ENCODE measurements at regions of chr10 and their contacts with region 1.

Region 1: GRCh38 chr10:49164559-49165188 is 23.5 kb downstream of the TMEM273 start:
- DNase-seq: peak; percentile 55
- H3K4me3 Mint-ChIP-seq: no peak overlapping the region
- H3K27ac Mint-ChIP-seq: no peak overlapping the region
- H3K4me1 Mint-ChIP-seq: no peaks in the 10 kb centered on the region
- H3K27me3 Mint-ChIP-seq: peaks cover 92% of the 10 kb centered on the region
- CTCF ChIP-seq: peak; percentile 53

Region 2: DNA sequence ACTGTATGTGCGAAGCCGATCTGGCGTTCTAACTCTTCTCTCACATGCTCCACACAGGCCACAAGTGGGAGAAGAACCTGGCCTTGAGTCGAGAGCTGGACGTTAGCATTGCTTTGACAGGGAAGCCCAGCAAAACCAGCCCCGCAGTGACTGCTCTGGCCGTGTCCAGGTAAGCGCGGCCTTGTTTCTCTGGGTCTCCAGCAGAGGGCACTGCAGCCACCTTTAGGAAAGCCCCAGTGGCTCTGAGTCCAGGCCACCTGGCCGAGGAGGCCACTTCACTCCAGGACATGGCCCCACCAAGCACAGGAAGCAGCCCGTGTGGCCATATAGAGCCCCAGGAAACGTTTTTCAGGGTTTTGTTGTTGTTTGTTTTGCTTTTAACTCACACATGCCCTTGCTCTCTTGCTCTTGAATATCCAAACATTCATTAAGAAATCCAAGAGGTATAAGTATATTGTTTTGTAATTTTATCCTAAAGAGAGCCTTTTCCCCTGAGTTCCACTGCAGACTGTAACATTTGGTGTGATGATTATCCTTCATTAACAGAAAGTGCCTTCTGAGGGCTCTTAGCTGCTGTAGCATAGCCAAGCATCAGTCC is 183.3 kb before region 1 on chr10:
- CTCF ChIA-PET with region 1: interaction called, 3 read pairs
- intact Hi-C with region 1: loop called (anchors 2 kb)
- DNase-seq: peak; percentile 69
- H3K4me3 Mint-ChIP-seq: no peak overlapping the region
- H3K27ac Mint-ChIP-seq: no peak overlapping the region
- H3K4me1 Mint-ChIP-seq: no peaks in the 10 kb centered on the region
- H3K27me3 Mint-ChIP-seq: peaks cover 69% of the 10 kb centered on the region
- CTCF ChIP-seq: peak; percentile 72

Region 3: GRCh38 chr10:49230004-49230403 is 65.3 kb after region 1 on chr10:
- CTCF ChIA-PET with region 1: no interaction called
- intact Hi-C with region 1: no loop called
- DNase-seq: no peak
- H3K4me3 Mint-ChIP-seq: no peak overlapping the region
- H3K27ac Mint-ChIP-seq: no peak overlapping the region
- H3K4me1 Mint-ChIP-seq: no peaks in the 10 kb centered on the region
- H3K27me3 Mint-ChIP-seq: peaks cover 76% of the 10 kb centered on the region
- CTCF ChIP-seq: no peak

Measured in Calu3 (cell line).